Activated naive CD4-positive, alpha-beta T cell treated with anti-CD3 and anti-CD28 coated beads for 36 hours (primary cell): ENCODE measurements at regions of chr1 and their contacts with region 1.

Region 1: GRCh38 chr1:151728151-151729054 is 7.1 kb downstream of the RIIAD1 start:
- DNase-seq: no peak
- H3K4me3 Mint-ChIP-seq: no peak overlapping the region
- H3K27ac Mint-ChIP-seq: no peak overlapping the region
- H3K4me1 Mint-ChIP-seq: no peaks in the 10 kb centered on the region
- H3K27me3 Mint-ChIP-seq: peaks cover 29% of the 10 kb centered on the region

Region 2: DNA sequence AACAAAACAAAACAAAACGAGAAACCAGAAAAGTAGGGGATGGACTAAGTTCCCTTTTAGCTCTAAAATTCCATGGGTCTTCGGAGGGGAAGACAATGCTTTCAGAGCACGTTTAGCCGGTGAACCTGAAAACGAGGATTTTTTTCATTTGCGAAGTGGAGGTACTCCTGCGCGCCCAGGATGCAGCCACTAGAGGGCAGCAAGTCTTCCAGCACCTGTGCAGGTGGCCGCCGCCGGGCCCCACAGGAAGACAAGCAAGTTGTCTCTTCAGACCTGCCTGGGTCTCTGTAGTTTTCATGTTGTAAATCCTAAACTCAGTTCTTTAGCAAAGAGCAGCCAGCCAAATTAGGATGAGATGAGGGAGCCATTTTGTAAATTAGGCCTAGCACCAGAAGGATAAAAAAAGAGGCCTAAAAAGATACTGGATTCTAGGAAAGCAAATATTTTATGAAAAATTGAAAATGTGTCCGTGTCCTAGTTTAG is 134.2 kb before region 1 on chr1:
- CTCF ChIA-PET with region 1: interaction called, 19 read pairs
- intact Hi-C with region 1: no loop called
- DNase-seq: peak; percentile 94
- H3K4me3 Mint-ChIP-seq: peak overlapping the region; percentile 50
- H3K27ac Mint-ChIP-seq: no peak overlapping the region
- H3K4me1 Mint-ChIP-seq: peaks cover 10% of the 10 kb centered on the region
- H3K27me3 Mint-ChIP-seq: no peaks in the 10 kb centered on the region